ENCODE measurements at regions of chr1 and their contacts with region 1.

Region 1: DNA sequence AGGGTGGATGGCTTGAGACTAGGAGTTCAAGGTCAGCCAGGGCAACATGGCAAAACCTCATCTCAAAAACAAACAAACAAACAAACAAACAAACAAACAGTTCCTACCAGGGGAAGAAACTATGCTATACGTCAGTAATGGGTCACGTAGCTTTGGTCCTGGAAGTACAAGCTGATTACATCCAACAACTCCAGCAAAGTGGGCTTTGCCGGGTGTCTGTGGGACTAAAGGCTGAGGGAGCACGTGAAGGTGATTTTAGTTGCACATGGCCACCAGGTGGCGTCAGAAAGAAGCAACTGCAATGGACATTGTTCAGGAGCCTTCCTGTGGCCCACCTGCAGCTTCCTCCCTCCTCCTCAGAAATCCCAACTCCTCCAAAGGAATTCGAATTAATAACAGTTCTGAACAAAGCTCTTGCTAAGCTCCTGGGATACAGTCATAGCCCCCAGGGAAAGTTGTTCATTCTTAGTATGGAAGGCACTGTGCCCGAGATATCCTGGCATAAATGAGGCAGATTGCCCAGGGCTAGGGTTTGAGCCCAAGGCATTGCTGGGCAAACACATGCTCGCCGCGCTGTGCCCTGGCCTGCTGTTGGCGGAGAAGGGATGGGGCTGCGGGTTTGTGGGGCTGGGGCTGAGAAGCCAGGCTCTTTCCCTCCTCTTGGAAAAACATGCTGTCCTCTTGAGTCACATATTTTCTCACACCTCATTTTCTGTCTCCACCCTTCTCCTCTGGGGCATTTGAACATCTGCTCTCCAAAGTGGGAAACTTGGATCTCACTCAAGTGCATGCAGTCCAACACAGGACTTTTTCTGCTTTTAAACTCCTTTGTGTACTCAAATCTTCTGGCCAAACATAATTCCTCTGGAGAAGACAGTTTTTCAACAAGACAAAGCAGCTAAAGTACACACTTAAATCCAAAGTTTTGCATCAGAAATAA is 28.6 kb downstream of the AKNAD1 start:
- DNase-seq: peak; percentile 81
- H3K4me3 Mint-ChIP-seq: no peak overlapping the region
- H3K27ac Mint-ChIP-seq: no peak overlapping the region
- H3K4me1 Mint-ChIP-seq: peaks cover 10% of the 10 kb centered on the region
- H3K27me3 Mint-ChIP-seq: no peaks in the 10 kb centered on the region

Region 2: DNA sequence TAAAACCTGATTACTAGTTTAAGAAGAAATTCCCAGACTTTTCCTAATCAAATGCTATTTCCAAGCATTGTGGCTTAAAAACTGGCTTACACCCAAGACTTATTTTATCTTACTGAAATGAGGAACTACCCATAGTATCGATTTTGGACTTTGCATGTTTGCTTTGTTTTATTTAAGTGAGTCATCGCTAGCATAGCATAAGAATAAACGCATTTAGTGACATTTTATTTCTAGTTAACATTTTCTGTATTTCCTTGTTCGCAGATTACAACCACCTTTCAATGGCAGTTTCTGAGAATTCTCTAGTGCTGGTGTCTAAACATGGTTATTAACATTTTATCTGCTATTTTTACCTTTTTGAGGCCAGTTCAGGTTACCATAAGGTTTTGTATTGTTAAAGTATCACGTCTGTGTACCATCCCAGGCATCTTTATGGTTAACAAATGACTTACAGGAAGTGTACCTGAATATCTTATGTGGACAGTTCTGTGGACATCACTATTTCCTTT is 243.9 kb before region 1 on chr1:
- CTCF ChIA-PET with region 1: no interaction called
- POLR2A ChIA-PET with region 1: no interaction called
- DNase-seq: no peak
- H3K4me3 Mint-ChIP-seq: no peak overlapping the region
- H3K27ac Mint-ChIP-seq: no peak overlapping the region
- H3K4me1 Mint-ChIP-seq: peaks cover 8% of the 10 kb centered on the region
- H3K27me3 Mint-ChIP-seq: no peaks in the 10 kb centered on the region

Region 3: DNA sequence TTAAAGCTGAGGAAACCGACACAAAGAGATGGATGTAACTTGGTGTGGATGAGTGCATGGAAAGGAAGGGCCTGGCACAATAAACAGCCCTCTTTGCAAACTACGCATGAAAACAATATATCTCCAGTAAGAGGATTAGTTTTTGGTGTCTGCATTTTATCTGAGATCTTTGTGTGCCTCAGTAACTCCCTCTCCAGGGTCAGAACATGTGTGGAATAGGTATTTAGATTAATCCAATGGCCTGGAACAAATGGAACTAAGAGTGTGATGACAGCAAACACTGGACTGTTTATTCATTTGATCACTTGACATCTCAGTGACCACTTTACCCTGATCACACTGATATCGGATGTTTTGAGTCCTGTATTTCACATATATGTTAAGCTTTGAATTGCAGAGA is 16.7 kb before region 1 on chr1:
- CTCF ChIA-PET with region 1: no interaction called
- POLR2A ChIA-PET with region 1: no interaction called
- DNase-seq: no peak
- H3K4me3 Mint-ChIP-seq: no peak overlapping the region
- H3K27ac Mint-ChIP-seq: no peak overlapping the region
- H3K4me1 Mint-ChIP-seq: no peaks in the 10 kb centered on the region
- H3K27me3 Mint-ChIP-seq: peaks cover 14% of the 10 kb centered on the region

Region 4: GRCh38 chr1:108897865-108898720 is 69.8 kb after region 1 on chr1:
- CTCF ChIA-PET with region 1: interaction called, 10 read pairs
- POLR2A ChIA-PET with region 1: no interaction called
- DNase-seq: peak; percentile 54
- H3K4me3 Mint-ChIP-seq: no peak overlapping the region
- H3K27ac Mint-ChIP-seq: no peak overlapping the region
- H3K4me1 Mint-ChIP-seq: no peaks in the 10 kb centered on the region
- H3K27me3 Mint-ChIP-seq: no peaks in the 10 kb centered on the region